ENCODE measurements at regions of chr1 and their contacts with region 1.

Region 1: GRCh38 chr1:216854836-216855484 is 131.7 kb upstream of the ESRRG start:
- DNase-seq: no peak
- ATAC-seq: no peak
- H3K4me3 ChIP-seq: no peak overlapping the region
- H3K27ac ChIP-seq: no peak overlapping the region
- H3K4me1 ChIP-seq: no peaks in the 10 kb centered on the region
- H3K27me3 ChIP-seq: no peaks in the 10 kb centered on the region
- CTCF ChIP-seq: no peak
- EP300 ChIP-seq: no peak
- POLR2A ChIP-seq: no peak
- RAD21 ChIP-seq: no peak

Region 2: GRCh38 chr1:216766633-216767325 is 88.2 kb before region 1 on chr1:
- CTCF ChIA-PET with region 1: no interaction called
- POLR2A ChIA-PET with region 1: no interaction called
- in situ Hi-C with region 1: no loop called
- intact Hi-C with region 1: no loop called
- DNase-seq: no peak
- ATAC-seq: no peak
- H3K4me3 ChIP-seq: no peak overlapping the region
- H3K27ac ChIP-seq: no peak overlapping the region
- H3K4me1 ChIP-seq: no peaks in the 10 kb centered on the region
- H3K27me3 ChIP-seq: no peaks in the 10 kb centered on the region
- CTCF ChIP-seq: no peak
- EP300 ChIP-seq: no peak
- POLR2A ChIP-seq: no peak
- RAD21 ChIP-seq: no peak

Region 3: GRCh38 chr1:216832197-216832596 is 22.8 kb before region 1 on chr1:
- CTCF ChIA-PET with region 1: no interaction called
- POLR2A ChIA-PET with region 1: no interaction called
- in situ Hi-C with region 1: no loop called
- intact Hi-C with region 1: loop called (anchors 2 kb)
- DNase-seq: no peak
- ATAC-seq: no peak
- H3K4me3 ChIP-seq: no peak overlapping the region
- H3K27ac ChIP-seq: no peak overlapping the region
- H3K4me1 ChIP-seq: no peaks in the 10 kb centered on the region
- H3K27me3 ChIP-seq: no peaks in the 10 kb centered on the region
- CTCF ChIP-seq: no peak
- EP300 ChIP-seq: no peak
- POLR2A ChIP-seq: no peak
- RAD21 ChIP-seq: no peak